ENCODE measurements at regions of chr13 and their contacts with region 1.

Region 1: DNA sequence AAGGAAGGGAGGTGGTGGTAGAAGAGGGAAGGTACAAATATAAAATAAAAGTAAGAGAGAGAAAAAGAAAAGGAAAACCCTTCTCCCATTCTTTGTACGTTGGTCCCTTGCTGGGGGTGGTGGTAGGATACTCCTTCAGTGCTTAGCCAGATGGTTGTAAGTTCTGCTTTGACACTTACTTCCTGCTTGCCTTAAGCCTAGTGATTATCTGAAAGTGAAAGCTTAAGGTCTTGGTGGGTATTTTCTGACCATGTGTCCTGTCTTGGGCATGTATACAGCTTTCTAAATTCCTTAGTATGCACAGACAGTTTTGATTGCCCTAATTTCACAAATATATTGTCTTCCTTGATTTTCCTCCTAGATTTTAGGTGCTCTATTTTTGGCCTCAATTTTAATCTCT is 314.8 kb downstream of the PCDH17 start:
- DNase-seq: no peak
- ATAC-seq: no peak
- H3K4me3 ChIP-seq: no peak overlapping the region
- H3K27ac ChIP-seq: no peak overlapping the region
- H3K4me1 ChIP-seq: no peaks in the 10 kb centered on the region
- H3K27me3 ChIP-seq: no peaks in the 10 kb centered on the region

Region 2: GRCh38 chr13:57925250-57925649 is 21.1 kb before region 1 on chr13:
- intact Hi-C with region 1: loop called in 1 of 2 experiments (anchors 2 kb)
- DNase-seq: no peak
- ATAC-seq: no peak
- H3K4me3 ChIP-seq: no peak overlapping the region
- H3K27ac ChIP-seq: no peak overlapping the region
- H3K4me1 ChIP-seq: no peaks in the 10 kb centered on the region
- H3K27me3 ChIP-seq: no peaks in the 10 kb centered on the region

Measured in aorta (tissue), 5 donors.